Upper lobe of right lung (tissue), 1 donor: ENCODE measurements at regions of chr15 and their contacts with region 1.

Region 1: DNA sequence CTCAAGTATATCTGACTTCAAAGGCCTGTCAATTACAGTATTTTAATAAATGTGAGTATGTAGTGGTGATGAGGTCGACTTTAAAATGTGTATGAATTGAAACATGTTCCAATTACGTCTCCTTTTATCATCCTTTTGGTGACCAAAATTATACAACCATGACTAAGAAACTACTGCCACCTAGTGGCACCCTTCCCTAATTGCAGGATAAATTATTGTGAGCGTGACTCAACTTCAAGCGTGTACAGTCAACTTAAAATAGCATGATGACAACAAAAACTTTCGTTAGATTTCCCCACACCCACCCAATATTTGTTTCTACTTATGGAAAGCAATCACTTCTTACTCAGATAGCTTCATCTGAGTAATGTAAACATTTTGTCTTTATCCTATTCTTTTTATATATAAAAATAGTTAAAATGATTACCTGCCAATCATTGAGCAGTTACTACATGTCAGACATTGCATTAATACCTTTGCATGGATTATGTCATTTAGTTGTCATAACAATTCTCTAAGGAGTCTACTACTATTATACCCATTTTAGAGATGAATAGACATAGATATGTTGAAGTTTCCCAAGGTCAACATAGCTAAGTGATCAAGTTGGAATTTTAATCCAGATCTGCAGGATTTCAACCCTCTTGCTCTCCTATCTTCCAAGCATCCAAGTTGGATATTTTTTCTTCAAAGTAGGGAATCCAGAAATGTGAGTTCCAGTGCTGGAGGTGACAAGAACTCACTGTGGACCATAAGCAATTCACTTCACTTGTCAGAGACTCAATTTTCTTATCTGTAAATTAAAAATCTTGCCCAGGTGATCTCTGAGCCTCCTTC is 106.0 kb downstream of the MEX3B start:
- DNase-seq: no peak
- ATAC-seq: no peak
- H3K4me3 ChIP-seq: no peak overlapping the region
- H3K27ac ChIP-seq: no peak overlapping the region
- H3K4me1 ChIP-seq: no peaks in the 10 kb centered on the region
- H3K27me3 ChIP-seq: no peaks in the 10 kb centered on the region
- CTCF ChIP-seq: peak; percentile 42

Region 2: GRCh38 chr15:81296673-81297072 is 643.1 kb before region 1 on chr15:
- intact Hi-C with region 1: loop called (anchors 10 kb)
- DNase-seq: peak; percentile 72
- ATAC-seq: peak; percentile 81
- H3K4me3 ChIP-seq: peak overlapping the region; percentile 49
- H3K27ac ChIP-seq: peak overlapping the region; percentile 79
- H3K4me1 ChIP-seq: peaks cover 48% of the 10 kb centered on the region
- H3K27me3 ChIP-seq: no peaks in the 10 kb centered on the region
- CTCF ChIP-seq: no peak

Region 3: DNA sequence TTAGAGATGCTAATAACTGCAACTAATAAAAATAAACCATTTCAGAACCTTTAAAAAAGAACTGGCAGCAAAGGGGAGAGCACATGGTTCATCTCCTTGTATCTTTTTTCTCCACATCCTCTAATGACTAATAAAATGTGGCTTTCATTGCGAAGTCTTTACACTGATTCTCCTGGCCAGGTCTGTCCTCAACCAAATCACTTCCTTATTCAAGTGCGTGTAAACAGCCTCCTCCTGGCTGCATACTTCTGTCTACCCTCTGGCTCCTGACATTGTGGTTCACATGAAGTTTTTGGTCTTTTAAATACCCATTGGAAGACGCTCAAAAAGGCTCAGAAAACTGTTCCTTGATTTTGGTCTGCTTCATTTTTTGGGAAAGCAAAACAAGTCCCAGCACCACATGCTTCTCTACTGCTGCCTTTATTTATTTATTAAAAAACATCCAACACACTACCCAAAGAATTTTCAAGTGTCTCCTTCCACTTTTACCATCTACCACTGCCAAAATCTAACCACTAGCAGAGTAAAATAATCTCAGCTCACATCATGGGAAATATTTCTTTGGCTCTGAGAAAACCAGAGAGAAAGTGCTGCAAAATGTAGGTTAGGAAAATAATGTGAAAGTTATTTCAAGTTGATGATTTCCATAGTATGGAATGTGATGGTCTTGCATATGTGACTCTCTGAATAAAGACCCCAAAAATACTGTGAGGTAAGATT is 237.6 kb after region 1 on chr15:
- intact Hi-C with region 1: no loop called
- DNase-seq: no peak
- ATAC-seq: peak; percentile 50
- H3K4me3 ChIP-seq: no peak overlapping the region
- H3K27ac ChIP-seq: no peak overlapping the region
- H3K4me1 ChIP-seq: peaks cover 6% of the 10 kb centered on the region
- H3K27me3 ChIP-seq: no peaks in the 10 kb centered on the region
- CTCF ChIP-seq: no peak